Heart right ventricle (tissue), 16 donors: ENCODE measurements at regions of chr6 and their contacts with region 1.

Region 1: DNA sequence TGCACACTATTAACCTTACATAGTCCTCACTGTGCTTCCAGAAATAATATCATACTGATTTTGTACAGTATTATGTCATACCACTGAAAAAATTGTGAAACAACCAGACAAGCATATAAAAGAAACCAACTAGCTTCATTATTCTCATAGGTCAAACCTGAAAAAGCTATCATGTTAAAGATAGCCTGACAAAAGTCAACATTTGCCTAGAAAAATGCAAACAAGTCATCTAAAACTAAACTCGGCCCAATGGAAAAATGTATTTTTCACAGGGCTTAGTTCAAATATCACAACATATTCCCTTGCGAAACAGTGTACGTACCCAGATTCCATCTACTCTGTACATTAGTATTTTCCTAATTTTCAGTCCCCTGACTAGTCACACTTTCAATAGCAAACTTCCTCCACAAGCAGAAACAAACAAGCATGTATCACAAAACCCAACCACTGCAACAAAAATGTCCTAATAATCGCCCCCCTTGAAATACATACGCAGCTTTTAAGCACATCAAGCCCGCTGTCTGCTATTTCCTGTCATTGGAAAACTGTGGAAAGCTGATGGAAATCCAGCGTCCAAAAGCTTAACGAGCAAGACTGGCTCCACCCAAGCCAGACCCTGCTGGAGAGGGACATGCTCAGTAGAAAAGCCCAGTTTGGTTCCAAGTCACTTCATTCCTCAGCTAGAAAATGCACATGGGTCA is 93.1 kb downstream of the EPB41L2 start:
- DNase-seq: peak; percentile 38 to 66
- ATAC-seq: peak; percentile 68 to 90 (median 84)
- H3K4me3 ChIP-seq: peak overlapping the region; percentile 15 to 61 (median 50)
- H3K27ac ChIP-seq: peak overlapping the region; percentile 9 to 82 (median 79)
- H3K4me1 ChIP-seq: peaks cover 0 to 56% (median 45%) of the 10 kb centered on the region in 9 donors
- H3K27me3 ChIP-seq: no peaks in the 10 kb centered on the region
- CTCF ChIP-seq: no peak

Region 2: GRCh38 chr6:130760006-130760405 is 209.9 kb before region 1 on chr6:
- intact Hi-C with region 1: no loop called
- DNase-seq: no peak
- ATAC-seq: no peak
- H3K4me3 ChIP-seq: no peak overlapping the region
- H3K27ac ChIP-seq: no peak overlapping the region
- H3K4me1 ChIP-seq: peaks cover 0 to 10% (median 0%) of the 10 kb centered on the region in 9 donors
- H3K27me3 ChIP-seq: peaks cover 0 to 3% (median 0%) of the 10 kb centered on the region in 7 donors
- CTCF ChIP-seq: peak in 2 of 9 donors; percentile 9 to 27

Region 3: GRCh38 chr6:130900913-130901312 is 69.0 kb before region 1 on chr6:
- intact Hi-C with region 1: loop called in 1 of 10 experiments (anchors 10 kb)
- DNase-seq: peak; percentile 15 to 63
- ATAC-seq: peak in 3 of 8 donors; percentile 58 to 84 (median 68)
- H3K4me3 ChIP-seq: no peak overlapping the region
- H3K27ac ChIP-seq: no peak overlapping the region
- H3K4me1 ChIP-seq: peaks cover 0 to 20% (median 0%) of the 10 kb centered on the region in 9 donors
- H3K27me3 ChIP-seq: no peaks in the 10 kb centered on the region
- CTCF ChIP-seq: no peak

Region 4: DNA sequence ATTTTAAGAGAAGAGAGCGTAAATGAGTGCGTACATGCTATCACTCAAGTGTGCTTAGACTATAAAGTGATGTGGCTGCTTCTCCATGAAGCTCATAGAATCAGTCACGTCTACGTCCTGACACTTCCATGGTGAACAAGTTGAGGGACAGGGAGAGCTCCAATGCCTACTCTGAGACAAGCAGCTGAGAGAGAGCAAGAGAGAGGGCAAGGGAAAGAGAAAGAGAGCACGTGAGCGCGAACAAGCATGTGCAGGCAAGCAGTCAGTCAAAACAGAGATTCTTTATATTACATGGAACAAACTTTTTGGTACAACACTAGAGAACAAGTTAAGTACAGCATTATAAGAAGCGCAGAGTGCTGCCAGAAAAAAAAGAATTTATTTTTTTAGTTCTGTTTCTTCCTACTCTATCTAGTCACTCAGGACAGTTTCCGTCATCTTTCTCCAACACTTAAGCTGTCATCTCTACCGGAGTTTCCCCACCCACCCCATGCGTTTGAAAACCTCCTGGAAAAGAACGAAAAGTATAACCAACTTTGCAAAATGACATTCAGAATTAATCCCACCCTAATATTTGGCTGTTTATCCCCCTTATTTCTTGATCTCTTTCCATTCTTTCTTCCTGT is 31.3 kb after region 1 on chr6:
- intact Hi-C with region 1: loop called in 1 of 10 experiments (anchors 5 kb)
- DNase-seq: no peak
- ATAC-seq: peak in 1 of 8 donors; percentile 26
- H3K4me3 ChIP-seq: peak overlapping the region in 3 of 10 donors; percentile 16 to 28 (median 25)
- H3K27ac ChIP-seq: peak overlapping the region in 3 of 10 donors; percentile 5 to 58 (median 41)
- H3K4me1 ChIP-seq: peaks cover 0 to 91% (median 48%) of the 10 kb centered on the region in 9 donors
- H3K27me3 ChIP-seq: no peaks in the 10 kb centered on the region
- CTCF ChIP-seq: no peak

Region 5: DNA sequence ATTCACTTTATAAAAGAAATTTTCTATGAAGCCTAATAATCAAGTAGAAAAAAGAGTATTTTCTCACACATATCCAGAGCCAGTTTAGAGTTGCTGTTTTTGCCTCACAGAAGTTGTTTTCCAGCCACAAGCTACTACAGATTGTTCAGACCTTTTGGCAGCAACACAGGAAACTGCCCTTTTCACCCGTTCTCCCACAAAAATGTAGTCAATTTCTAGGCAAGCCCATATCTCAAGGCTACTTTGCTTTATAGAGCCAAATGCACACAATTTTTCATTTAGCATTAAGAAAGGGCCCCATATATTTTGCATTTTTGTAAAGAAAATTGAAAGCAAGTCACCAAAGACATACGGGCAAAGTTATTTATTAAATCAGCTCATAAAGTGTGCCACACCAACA is 43.6 kb after region 1 on chr6:
- intact Hi-C with region 1: loop called in 1 of 10 experiments (anchors 2 kb)
- DNase-seq: peak in 1 of 2 donors; percentile 47
- ATAC-seq: peak in 5 of 8 donors; percentile 53 to 74 (median 60)
- H3K4me3 ChIP-seq: peak overlapping the region in 3 of 10 donors; percentile 14 to 34 (median 18)
- H3K27ac ChIP-seq: peak overlapping the region in 7 of 10 donors; percentile 2 to 57 (median 33)
- H3K4me1 ChIP-seq: peaks cover 0 to 57% (median 36%) of the 10 kb centered on the region in 9 donors
- H3K27me3 ChIP-seq: no peaks in the 10 kb centered on the region
- CTCF ChIP-seq: no peak

Region 6: DNA sequence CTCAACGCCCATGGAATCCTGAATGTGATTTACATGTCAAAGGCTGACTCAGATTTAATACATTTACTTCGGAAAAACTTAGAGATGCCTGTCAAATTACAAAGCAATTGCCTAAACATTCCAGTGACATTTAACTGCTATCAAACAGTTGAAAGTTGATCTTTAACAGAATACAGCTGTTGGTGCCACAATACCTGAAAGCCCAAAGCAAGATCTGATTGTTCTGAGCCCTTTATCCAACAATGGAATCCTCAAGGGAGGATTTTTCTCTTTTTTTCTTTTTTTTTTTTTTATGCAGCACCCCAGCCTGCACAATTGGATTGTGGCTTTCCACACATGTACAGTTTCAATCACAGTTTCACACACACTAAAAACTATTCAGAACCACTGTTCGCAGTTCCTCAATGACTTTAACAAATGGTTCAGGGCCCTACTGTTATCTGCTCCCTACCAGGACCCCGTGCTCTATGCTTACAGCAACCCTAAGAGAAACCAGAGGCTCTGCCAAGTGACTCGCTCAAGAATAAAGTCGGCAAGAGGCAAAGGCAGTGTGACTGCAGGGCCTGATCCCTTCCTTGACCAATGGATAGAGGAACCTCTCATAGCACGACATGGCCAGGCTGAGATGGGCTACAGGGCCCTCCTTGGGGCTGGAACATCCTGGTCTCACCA is 59.8 kb after region 1 on chr6:
- intact Hi-C with region 1: loop called in 2 of 10 experiments (anchors 1 to 10 kb)
- DNase-seq: peak in 1 of 2 donors; percentile 19
- ATAC-seq: peak; percentile 38 to 83 (median 70)
- H3K4me3 ChIP-seq: no peak overlapping the region
- H3K27ac ChIP-seq: peak overlapping the region in 2 of 10 donors; percentile 3 to 33
- H3K4me1 ChIP-seq: peaks cover 0 to 42% (median 18%) of the 10 kb centered on the region in 9 donors
- H3K27me3 ChIP-seq: no peaks in the 10 kb centered on the region
- CTCF ChIP-seq: no peak

Region 7: DNA sequence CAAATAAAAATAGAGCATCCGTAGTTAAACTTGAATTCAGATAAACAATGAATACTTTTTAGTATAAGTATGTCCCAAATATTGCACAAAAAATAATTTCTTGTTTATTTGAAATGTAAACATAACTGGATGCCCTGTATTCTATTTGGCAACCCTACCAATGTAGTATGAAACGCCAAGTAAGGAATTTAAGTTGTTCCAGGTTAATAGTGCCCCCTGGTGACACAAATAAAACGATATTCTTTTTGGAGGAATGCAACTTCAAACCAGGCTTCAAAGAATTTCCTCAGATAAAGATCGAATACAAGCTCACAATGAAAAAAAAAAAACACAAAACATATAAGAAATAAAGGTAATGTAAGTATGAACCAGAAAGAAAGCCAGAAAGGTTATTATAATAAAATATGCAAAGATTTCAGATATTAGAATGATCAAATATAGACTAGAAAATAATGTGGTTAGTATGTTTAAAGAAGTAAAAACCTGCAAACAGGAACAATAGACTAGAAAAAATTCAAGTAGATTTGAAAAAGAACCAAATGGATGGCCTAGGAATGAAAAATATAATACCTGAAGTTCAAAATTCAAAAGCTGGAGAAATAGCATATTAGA is 146.9 kb after region 1 on chr6:
- intact Hi-C with region 1: loop called in 1 of 10 experiments (anchors 10 kb)
- DNase-seq: peak in 1 of 2 donors; percentile 11
- ATAC-seq: peak in 1 of 8 donors; percentile 54
- H3K4me3 ChIP-seq: no peak overlapping the region
- H3K27ac ChIP-seq: no peak overlapping the region
- H3K4me1 ChIP-seq: no peaks in the 10 kb centered on the region
- H3K27me3 ChIP-seq: no peaks in the 10 kb centered on the region
- CTCF ChIP-seq: peak; percentile 20 to 71 (median 53)